Activated CD4-positive, alpha-beta T cell treated with anti-CD3 and anti-CD28 coated beads, Interleukin-2, amount 10 ng/mL, durations not matched to agents 24 days and 14 days (primary cell): ENCODE measurements at regions of chr3 and their contacts with region 1.

Region 1: GRCh38 chr3:52056968-52057805 is 816 bp upstream of the DUSP7 start:
- DNase-seq: peak; percentile 100
- H3K4me3 Mint-ChIP-seq: peak overlapping the region; percentile 89
- H3K27ac Mint-ChIP-seq: peak overlapping the region; percentile 95
- H3K4me1 Mint-ChIP-seq: peaks cover 34% of the 10 kb centered on the region
- H3K27me3 Mint-ChIP-seq: no peaks in the 10 kb centered on the region

Region 2: DNA sequence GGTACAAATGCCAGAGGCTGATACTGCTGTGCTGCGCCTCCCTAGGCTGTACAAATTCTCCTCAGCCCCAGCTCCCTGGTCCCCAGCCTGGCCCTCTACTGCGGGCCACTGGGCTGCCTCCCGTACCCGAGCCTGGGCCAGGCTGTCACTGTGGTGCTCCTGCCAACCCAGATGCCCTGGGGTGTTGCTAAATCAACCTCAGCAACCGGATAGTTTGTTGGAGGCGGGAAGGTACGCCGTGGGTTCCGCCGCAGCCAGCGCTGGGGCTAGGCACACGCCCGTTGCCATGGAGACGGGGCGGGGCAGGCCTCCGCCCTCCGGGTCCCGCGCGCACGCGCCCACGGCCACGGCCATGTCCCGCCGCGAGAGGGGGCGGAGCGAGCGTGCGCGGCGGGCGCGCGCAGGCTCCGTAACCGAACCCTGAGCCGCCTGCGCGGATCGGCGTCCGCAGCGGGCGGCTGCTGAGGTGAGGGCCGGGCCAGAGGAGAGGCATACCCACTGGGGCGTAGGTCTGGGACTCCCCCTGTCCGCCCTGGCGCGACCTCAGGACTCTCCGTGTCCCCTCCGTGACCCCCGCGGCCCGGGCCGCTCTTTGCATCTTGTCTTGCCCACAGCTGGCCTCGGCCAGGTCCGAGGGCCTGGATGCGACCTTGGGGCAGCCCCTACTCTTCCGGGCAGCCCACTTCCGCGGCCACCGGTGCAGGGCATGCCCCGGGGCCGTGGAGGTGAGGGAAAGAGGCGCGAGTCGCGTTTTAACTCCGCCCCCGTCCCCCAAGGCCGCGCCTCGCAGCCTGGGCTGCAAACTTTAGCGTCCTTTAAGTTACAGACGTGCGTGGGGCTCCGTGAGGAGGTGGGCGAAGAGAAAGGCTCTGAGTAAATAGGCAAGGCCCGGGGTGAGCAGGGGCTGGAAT is 386.1 kb before region 1 on chr3 and contains the start of gene TEX264:
- intact Hi-C with region 1: loop called (anchors 5 kb)
- DNase-seq: peak; percentile 99
- H3K4me3 Mint-ChIP-seq: peak within 1 kb of the TSS; percentile 93
- H3K27ac Mint-ChIP-seq: peak within 1 kb of the TSS; percentile 93
- H3K4me1 Mint-ChIP-seq: peaks cover 61% of the 10 kb centered on the region
- H3K27me3 Mint-ChIP-seq: no peaks in the 10 kb centered on the region
- total RNA-seq, gene TEX264: 45.6 and 47.0 TPM in 2 replicates

Region 3: GRCh38 chr3:51974963-51975851 is 82.0 kb before region 1 on chr3 and contains the start of gene ABHD14A:
- intact Hi-C with region 1: loop called (anchors 1 kb)
- DNase-seq: peak; percentile 94
- H3K4me3 Mint-ChIP-seq: peak within 1 kb of the TSS; percentile 87
- H3K27ac Mint-ChIP-seq: peak within 1 kb of the TSS; percentile 96
- H3K4me1 Mint-ChIP-seq: peaks cover 17% of the 10 kb centered on the region
- H3K27me3 Mint-ChIP-seq: no peaks in the 10 kb centered on the region
- total RNA-seq, gene ABHD14A: 12.3 and 13.8 TPM in 2 replicates

Region 4: GRCh38 chr3:52046186-52046913 is 10.8 kb before region 1 on chr3:
- intact Hi-C with region 1: no loop called
- DNase-seq: no peak
- H3K4me3 Mint-ChIP-seq: no peak overlapping the region
- H3K27ac Mint-ChIP-seq: no peak overlapping the region
- H3K4me1 Mint-ChIP-seq: peaks cover 8% of the 10 kb centered on the region
- H3K27me3 Mint-ChIP-seq: peaks cover 6% of the 10 kb centered on the region

Region 5: GRCh38 chr3:52086921-52087663 is 29.9 kb after region 1 on chr3:
- intact Hi-C with region 1: loop called (anchors 2 kb)
- DNase-seq: peak; percentile 68
- H3K4me3 Mint-ChIP-seq: peak overlapping the region; percentile 19
- H3K27ac Mint-ChIP-seq: peak overlapping the region; percentile 65
- H3K4me1 Mint-ChIP-seq: peaks cover 24% of the 10 kb centered on the region
- H3K27me3 Mint-ChIP-seq: no peaks in the 10 kb centered on the region

Region 6: DNA sequence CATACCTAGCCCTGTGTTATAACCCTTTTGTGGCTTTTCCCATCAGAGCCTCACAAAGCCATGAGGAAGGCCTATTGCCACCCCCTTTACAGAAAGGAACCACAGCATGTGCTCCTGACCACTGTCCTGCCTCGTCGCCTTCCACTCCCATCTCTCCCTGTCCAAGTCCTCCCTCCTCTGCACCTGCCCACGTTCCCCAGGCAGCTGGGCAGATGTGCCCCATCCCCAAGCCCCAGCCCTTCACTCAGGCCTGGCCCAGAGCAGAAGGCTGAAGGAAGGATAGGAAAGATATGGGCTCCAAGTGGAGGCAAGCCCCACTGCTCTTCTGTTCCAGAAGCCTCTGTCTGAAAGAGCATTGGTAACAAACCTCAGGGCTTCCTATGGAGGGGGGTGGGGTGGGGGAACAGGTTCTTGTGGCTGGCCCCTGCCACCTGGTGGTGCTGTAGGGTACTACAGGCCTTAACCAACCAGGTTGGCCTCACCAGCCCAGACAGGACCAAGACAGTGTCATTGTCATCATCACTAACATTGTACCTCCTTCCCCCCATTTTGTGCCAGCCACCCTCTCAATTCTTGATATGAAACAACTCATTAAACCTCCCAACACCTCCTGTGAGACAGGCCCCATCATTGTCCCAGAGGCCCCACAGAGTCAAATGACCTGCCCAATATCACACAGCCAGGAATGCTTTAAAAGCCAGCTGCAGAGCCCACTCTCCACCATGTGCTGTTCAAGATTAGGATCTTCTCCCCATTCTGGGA is 87.0 kb after region 1 on chr3:
- intact Hi-C with region 1: loop called (anchors 2 kb)
- DNase-seq: peak; percentile 95
- H3K4me3 Mint-ChIP-seq: no peak overlapping the region
- H3K27ac Mint-ChIP-seq: peak overlapping the region; percentile 40
- H3K4me1 Mint-ChIP-seq: peaks cover 5% of the 10 kb centered on the region
- H3K27me3 Mint-ChIP-seq: no peaks in the 10 kb centered on the region

Region 7: DNA sequence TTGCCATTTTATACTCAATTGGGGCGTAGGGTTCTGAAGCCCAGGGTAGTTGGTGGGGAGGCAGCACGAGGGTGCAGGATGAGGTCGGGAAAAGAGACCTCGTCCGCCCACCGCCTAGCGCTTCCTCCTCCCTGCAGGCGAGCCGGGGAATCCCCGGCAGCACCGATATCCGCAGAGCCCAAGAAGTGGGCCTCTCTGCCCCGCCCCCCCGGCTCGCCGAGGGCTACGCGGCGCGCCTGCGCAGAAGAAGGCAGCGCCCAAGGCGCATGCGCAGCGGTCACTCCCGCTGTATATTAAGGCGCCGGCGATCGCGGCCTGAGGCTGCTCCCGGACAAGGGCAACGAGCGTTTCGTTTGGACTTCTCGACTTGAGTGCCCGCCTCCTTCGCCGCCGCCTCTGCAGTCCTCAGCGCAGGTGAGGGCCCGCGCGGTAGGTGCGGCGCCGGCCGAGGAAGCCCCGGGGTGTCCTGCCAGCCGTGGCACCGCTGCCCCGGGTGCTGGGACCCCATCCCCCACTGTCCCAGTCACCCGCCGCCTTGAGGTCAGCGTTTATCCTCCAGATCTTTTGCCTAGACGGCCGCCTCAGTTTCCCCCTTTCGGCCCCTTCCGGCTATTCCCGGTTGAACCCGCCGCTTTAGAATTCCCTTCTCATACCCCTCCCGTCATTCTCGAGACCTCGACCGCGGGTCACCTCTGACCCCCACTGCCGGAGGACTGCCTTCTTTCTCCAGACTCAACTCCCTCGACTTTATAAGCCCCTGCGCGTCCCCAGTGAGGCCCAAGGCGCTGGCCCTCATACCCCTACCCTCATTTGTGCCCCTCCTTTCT is 140.9 kb after region 1 on chr3 and contains the start of gene ALAS1:
- intact Hi-C with region 1: loop called (anchors 2 kb)
- DNase-seq: peak; percentile 99
- H3K4me3 Mint-ChIP-seq: peak within 1 kb of the TSS; percentile 100
- H3K27ac Mint-ChIP-seq: peak within 1 kb of the TSS; percentile 89
- H3K4me1 Mint-ChIP-seq: peaks cover 52% of the 10 kb centered on the region
- H3K27me3 Mint-ChIP-seq: no peaks in the 10 kb centered on the region
- total RNA-seq, gene ALAS1: 115 and 118 TPM in 2 replicates

Region 8: GRCh38 chr3:52471371-52472238 is 414.4 kb after region 1 on chr3:
- intact Hi-C with region 1: no loop called
- DNase-seq: peak; percentile 75
- H3K4me3 Mint-ChIP-seq: no peak overlapping the region
- H3K27ac Mint-ChIP-seq: no peak overlapping the region
- H3K4me1 Mint-ChIP-seq: peaks cover 4% of the 10 kb centered on the region
- H3K27me3 Mint-ChIP-seq: no peaks in the 10 kb centered on the region

Region 9: GRCh38 chr3:52978109-52978754 is 921.0 kb after region 1 on chr3:
- intact Hi-C with region 1: no loop called
- DNase-seq: no peak
- H3K4me3 Mint-ChIP-seq: no peak overlapping the region
- H3K27ac Mint-ChIP-seq: no peak overlapping the region
- H3K4me1 Mint-ChIP-seq: peaks cover 21% of the 10 kb centered on the region
- H3K27me3 Mint-ChIP-seq: no peaks in the 10 kb centered on the region